ENCODE measurements at regions of chr5 and their contacts with region 1.

Region 1: GRCh38 chr5:135993880-135994636 is 34.7 kb upstream of the TGFBI start:
- DNase-seq: no peak
- ATAC-seq: 0 out of 3 replicates have a peak, but pooled peaks have one; percentile 26
- H3K4me3 ChIP-seq: no peak overlapping the region
- H3K27ac ChIP-seq: no peak overlapping the region
- H3K4me1 ChIP-seq: no peaks in the 10 kb centered on the region
- H3K27me3 ChIP-seq: peaks cover 0 to 5% of the 10 kb centered on the region in 2 experiments; a peak in 3 of 4 replicates
- CTCF ChIP-seq: no peak
- EP300 ChIP-seq: no peak
- POLR2A ChIP-seq: no peak
- RAD21 ChIP-seq: no peak

Region 2: DNA sequence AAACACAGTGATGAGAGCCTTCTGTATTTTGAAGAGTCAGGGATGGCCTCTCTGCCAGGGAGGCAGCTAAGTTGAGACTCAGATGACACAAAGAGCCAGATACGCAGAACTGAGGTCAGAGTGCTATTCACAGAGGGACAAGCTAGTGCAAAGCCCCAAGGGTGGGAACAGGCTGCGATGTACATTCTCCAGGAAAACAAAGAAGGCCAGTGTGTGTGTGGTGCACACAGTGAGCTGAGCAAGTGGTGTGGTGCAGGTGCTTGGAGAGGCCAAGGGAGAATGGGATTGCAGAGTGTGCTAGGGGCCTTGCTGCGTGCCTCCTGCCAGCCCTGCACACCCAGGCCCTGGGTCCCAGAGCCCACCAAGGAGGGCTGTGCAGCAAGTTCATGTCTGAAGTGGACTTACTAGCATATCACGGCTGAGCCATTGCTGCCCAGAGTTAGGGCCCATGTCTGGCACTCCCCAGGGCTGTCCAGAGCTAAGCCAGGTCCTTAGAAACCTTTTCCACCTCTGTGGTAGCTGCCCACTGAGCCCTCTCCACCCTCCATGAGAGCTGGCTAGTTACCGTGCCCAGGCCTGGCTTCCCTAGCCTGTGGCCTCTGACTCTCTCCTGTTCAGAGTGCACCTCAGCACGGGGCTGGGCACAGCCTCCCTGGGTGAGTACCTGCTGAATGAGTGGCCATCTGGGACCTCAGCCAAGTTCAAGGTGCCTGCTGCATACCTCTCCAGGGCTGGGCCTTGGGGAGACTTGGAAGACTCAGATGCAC is 150.3 kb before region 1 on chr5:
- CTCF ChIA-PET with region 1: no interaction called
- POLR2A ChIA-PET with region 1: no interaction called
- RAD21 ChIA-PET with region 1: no interaction called
- SMC1A ChIA-PET with region 1: no interaction called
- in situ Hi-C with region 1: no loop called
- intact Hi-C with region 1: no loop called
- DNase-seq: no peak
- ATAC-seq: no peak
- H3K4me3 ChIP-seq: no peak overlapping the region
- H3K27ac ChIP-seq: no peak overlapping the region
- H3K4me1 ChIP-seq: no peaks in the 10 kb centered on the region
- H3K27me3 ChIP-seq: no peaks in the 10 kb centered on the region; a peak in 1 of 4 replicates
- CTCF ChIP-seq: no peak
- EP300 ChIP-seq: no peak
- POLR2A ChIP-seq: no peak
- RAD21 ChIP-seq: no peak

Region 3: DNA sequence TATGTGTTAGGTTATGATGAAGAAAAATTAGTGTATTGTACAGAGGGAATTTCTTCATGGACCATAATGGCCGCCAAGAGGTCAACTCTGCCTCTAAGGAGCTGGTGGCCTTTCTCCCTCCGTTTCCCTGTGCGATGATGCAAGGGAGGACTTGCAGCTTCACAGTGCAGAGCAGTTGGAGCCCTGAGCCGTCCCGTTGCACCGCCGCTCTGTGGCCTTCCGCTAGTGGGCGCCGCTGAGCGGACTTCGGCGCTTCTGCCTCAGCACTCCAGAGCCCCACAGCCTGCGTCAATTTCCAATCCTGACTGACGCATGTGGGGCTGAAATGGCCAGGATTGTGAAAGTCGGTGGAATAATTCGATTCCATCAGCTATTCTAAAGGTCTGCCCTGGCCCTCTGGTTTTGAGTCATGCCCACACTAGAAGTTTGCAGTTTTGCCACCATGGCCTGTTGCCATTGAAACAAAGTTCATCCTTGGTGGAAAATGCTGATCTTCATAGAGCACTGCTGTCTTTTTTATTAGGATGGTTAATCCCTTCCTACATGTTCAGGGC is 16.6 kb before region 1 on chr5:
- CTCF ChIA-PET with region 1: interaction called, 12 read pairs
- POLR2A ChIA-PET with region 1: no interaction called
- RAD21 ChIA-PET with region 1: no interaction called
- SMC1A ChIA-PET with region 1: interaction called, 3 read pairs
- in situ Hi-C with region 1: no loop called
- intact Hi-C with region 1: no loop called
- DNase-seq: no peak
- ATAC-seq: peak; percentile 99
- H3K4me3 ChIP-seq: no peak overlapping the region
- H3K27ac ChIP-seq: no peak overlapping the region
- H3K4me1 ChIP-seq: no peaks in the 10 kb centered on the region
- H3K27me3 ChIP-seq: peaks cover 0 to 3% of the 10 kb centered on the region in 2 experiments; a peak in 2 of 4 replicates
- CTCF ChIP-seq: peak; percentile 71 to 94 (median 88)
- EP300 ChIP-seq: no peak
- POLR2A ChIP-seq: no peak
- RAD21 ChIP-seq: peak; percentile 58

Measured in GM12878 (cell line).